CD8-positive, alpha-beta memory T cell (primary cell): ENCODE measurements at regions of chr14 and their contacts with region 1.

Region 1: DNA sequence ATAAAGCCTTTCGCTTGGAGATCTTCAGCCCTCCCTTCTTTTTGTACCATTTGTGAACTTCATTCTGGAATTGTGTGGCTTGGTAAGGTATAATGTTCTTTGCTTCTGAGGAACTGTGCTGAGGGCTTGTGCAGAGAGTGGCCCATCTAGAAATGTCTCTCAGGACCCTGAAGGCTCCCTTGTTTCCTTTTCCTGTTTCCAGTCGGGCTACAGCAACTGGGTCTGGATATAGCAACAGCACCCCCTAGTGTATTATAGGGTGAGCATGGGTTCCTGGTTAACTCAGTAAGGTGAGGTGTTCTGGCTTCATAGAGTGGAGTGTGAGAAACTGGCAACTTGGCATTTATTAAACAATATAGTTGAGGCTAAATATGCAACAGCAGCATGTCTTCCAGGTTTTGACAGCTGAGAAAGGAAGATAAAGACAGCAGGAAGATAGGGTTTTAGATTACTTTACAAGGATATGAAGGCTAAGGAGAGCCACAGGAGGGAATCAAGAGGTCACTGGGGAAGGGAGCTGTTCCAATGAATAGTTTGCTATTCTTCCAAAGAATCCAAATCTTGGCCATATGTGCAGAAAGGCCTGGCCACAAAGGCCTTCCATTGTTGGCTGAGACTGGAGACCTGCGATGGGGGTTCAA is 49.1 kb upstream of the RNU6-8 start:
- DNase-seq: peak in 4 of 5 donors; percentile 20 to 66 (median 60)
- H3K4me3 ChIP-seq: no peak overlapping the region
- H3K4me3 Mint-ChIP-seq: no peak overlapping the region
- H3K27ac ChIP-seq: no peak overlapping the region
- H3K27ac Mint-ChIP-seq: no peak overlapping the region
- H3K4me1 ChIP-seq: no peaks in the 10 kb centered on the region
- H3K4me1 Mint-ChIP-seq: no peaks in the 10 kb centered on the region
- H3K27me3 ChIP-seq: no peaks in the 10 kb centered on the region
- H3K27me3 Mint-ChIP-seq: peaks cover 0 to 6% of the 10 kb centered on the region in 2 donors

Region 2: DNA sequence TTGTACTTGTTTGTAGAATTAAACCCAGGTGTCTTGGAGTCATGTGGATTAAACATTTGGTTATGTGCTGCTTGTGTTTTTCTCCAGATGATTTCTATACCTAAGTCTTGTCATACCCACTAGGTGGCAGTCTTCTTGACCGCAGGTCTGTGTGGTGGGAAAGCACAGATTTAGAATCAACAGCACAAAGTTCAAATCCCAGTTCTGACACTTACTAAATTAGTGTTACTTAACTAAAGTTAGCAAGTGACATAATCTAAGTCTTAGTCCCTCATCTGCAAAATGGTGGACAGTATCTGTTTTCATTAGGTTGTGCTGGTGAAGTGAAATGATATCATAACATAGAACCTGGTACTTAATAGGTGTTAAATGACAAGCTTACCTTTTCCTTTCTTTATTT is 326.0 kb before region 1 on chr14:
- CTCF ChIA-PET with region 1: interaction called, 20 read pairs
- POLR2A ChIA-PET with region 1: no interaction called
- DNase-seq: peak in 2 of 5 donors; percentile 18 to 25
- H3K4me3 ChIP-seq: no peak overlapping the region
- H3K4me3 Mint-ChIP-seq: no peak overlapping the region
- H3K27ac ChIP-seq: no peak overlapping the region
- H3K27ac Mint-ChIP-seq: no peak overlapping the region
- H3K4me1 ChIP-seq: no peaks in the 10 kb centered on the region
- H3K4me1 Mint-ChIP-seq: peaks cover 0 to 9% (median 0%) of the 10 kb centered on the region in 3 donors
- H3K27me3 ChIP-seq: no peaks in the 10 kb centered on the region
- H3K27me3 Mint-ChIP-seq: peaks cover 0 to 2% of the 10 kb centered on the region in 2 donors

Region 3: DNA sequence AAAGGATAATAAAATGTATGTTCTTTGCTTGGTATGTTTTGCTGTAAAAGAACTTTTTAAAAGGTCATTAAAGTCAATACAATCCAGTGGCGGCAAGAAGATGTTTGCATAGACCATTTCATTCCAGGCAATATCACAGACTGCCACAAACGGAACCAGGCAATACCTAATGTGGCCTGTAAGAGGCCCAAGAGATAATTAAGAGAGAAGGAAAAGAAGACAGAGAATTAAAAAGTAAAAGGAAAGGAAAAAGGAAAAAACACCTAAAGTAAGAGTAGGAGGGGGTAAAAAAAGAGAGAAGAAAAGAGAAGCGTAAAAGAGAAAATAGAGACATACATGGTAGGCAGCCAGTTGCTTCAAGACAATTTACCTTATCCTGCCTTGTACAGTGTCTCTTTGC is 181.9 kb before region 1 on chr14:
- CTCF ChIA-PET with region 1: interaction called, 75 read pairs
- POLR2A ChIA-PET with region 1: no interaction called
- DNase-seq: no peak
- H3K4me3 ChIP-seq: no peak overlapping the region
- H3K4me3 Mint-ChIP-seq: no peak overlapping the region
- H3K27ac ChIP-seq: no peak overlapping the region
- H3K27ac Mint-ChIP-seq: no peak overlapping the region
- H3K4me1 ChIP-seq: no peaks in the 10 kb centered on the region
- H3K4me1 Mint-ChIP-seq: peaks cover 3 to 10% (median 5%) of the 10 kb centered on the region in 3 donors
- H3K27me3 ChIP-seq: peaks cover 4% of the 10 kb centered on the region
- H3K27me3 Mint-ChIP-seq: peaks cover 8 to 11% of the 10 kb centered on the region in 2 donors

Region 4: GRCh38 chr14:32076278-32077080 is 175.7 kb before region 1 on chr14:
- CTCF ChIA-PET with region 1: interaction called, 75 read pairs
- POLR2A ChIA-PET with region 1: interaction called, 3 read pairs
- DNase-seq: peak; percentile 66 to 79 (median 77)
- H3K4me3 ChIP-seq: peak overlapping the region; percentile 85
- H3K4me3 Mint-ChIP-seq: peak overlapping the region; percentile 91 to 100 (median 97)
- H3K27ac ChIP-seq: peak overlapping the region; percentile 67
- H3K27ac Mint-ChIP-seq: peak overlapping the region; percentile 82 to 99 (median 91)
- H3K4me1 ChIP-seq: peaks cover 14% of the 10 kb centered on the region
- H3K4me1 Mint-ChIP-seq: peaks cover 37 to 49% (median 42%) of the 10 kb centered on the region in 3 donors
- H3K27me3 ChIP-seq: no peaks in the 10 kb centered on the region
- H3K27me3 Mint-ChIP-seq: peaks cover 3% of the 10 kb centered on the region in 2 donors

Region 5: GRCh38 chr14:32150392-32150791 is 101.8 kb before region 1 on chr14:
- CTCF ChIA-PET with region 1: no interaction called
- POLR2A ChIA-PET with region 1: no interaction called
- DNase-seq: no peak
- H3K4me3 ChIP-seq: no peak overlapping the region
- H3K4me3 Mint-ChIP-seq: no peak overlapping the region
- H3K27ac ChIP-seq: no peak overlapping the region
- H3K27ac Mint-ChIP-seq: peak overlapping the region in 1 of 8 donors; percentile 9
- H3K4me1 ChIP-seq: no peaks in the 10 kb centered on the region
- H3K4me1 Mint-ChIP-seq: no peaks in the 10 kb centered on the region
- H3K27me3 ChIP-seq: no peaks in the 10 kb centered on the region
- H3K27me3 Mint-ChIP-seq: no peaks in the 10 kb centered on the region